ENCODE measurements at regions of chr6 and their contacts with region 1.

Region 1: GRCh38 chr6:166627033-166627874 is at the start of gene RPS6KA2:
- DNase-seq: peak; percentile 100
- ATAC-seq: peak; percentile 93 to 97 (median 95)
- H3K4me3 ChIP-seq: peak within 1 kb of the TSS; percentile 78 to 97 (median 92)
- H3K27ac ChIP-seq: peak within 1 kb of the TSS; percentile 85 to 97 (median 90)
- H3K4me1 ChIP-seq: peaks cover 5 to 76% (median 59%) of the 10 kb centered on the region in 9 donors
- H3K27me3 ChIP-seq: peaks cover 0 to 14% (median 0%) of the 10 kb centered on the region in 7 donors
- CTCF ChIP-seq: peak in 4 of 9 donors; percentile 28 to 43 (median 36)
- total RNA-seq, gene RPS6KA2: 47.7 to 91.4 (median 76.0) TPM

Region 2: DNA sequence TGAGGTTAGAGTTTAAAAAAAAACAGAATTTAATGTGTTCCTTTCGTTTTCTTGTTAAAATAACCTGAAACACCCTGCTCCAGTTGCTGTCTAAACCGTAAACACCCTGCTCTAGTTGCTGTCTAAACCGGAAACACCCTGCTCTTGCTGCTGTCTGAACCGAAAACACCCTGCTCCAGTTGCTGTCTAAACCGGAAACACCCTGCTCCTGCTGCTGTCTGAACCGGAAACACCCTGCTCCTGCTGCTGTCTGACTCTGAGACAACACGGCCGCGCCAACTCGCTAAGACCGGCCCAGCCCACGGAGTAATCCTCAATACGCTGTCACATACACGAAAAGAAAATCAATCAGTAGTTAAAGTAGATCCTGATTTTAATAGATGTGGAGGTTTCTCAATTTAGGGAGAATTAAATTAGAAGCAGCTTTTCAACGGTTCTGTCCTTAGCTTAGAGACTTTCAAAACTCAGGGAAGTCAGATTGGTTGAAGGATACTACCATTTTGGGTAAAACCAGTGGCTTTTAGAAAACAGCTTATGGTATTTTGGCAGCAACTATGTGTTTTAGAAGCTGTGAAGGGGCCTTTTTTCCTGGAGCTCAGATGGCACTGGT is 139.1 kb before region 1 on chr6:
- intact Hi-C with region 1: loop called in 1 of 10 experiments (anchors 10 kb)
- DNase-seq: peak; percentile 63 to 71
- ATAC-seq: peak; percentile 58 to 91 (median 80)
- H3K4me3 ChIP-seq: peak overlapping the region in 2 of 10 donors; percentile 2 to 5
- H3K27ac ChIP-seq: peak overlapping the region; percentile 18 to 88 (median 59)
- H3K4me1 ChIP-seq: peaks cover 6 to 38% (median 29%) of the 10 kb centered on the region in 9 donors
- H3K27me3 ChIP-seq: no peaks in the 10 kb centered on the region
- CTCF ChIP-seq: no peak

Region 3: GRCh38 chr6:166540631-166541331 is 86.5 kb before region 1 on chr6:
- intact Hi-C with region 1: loop called in 1 of 10 experiments (anchors 5 kb)
- DNase-seq: peak in 1 of 2 donors; percentile 54
- ATAC-seq: peak; percentile 61 to 91 (median 81)
- H3K4me3 ChIP-seq: peak overlapping the region in 6 of 10 donors; percentile 25 to 38 (median 29)
- H3K27ac ChIP-seq: peak overlapping the region; percentile 24 to 77 (median 59)
- H3K4me1 ChIP-seq: peaks cover 0 to 39% (median 25%) of the 10 kb centered on the region in 9 donors
- H3K27me3 ChIP-seq: no peaks in the 10 kb centered on the region
- CTCF ChIP-seq: no peak

Region 4: DNA sequence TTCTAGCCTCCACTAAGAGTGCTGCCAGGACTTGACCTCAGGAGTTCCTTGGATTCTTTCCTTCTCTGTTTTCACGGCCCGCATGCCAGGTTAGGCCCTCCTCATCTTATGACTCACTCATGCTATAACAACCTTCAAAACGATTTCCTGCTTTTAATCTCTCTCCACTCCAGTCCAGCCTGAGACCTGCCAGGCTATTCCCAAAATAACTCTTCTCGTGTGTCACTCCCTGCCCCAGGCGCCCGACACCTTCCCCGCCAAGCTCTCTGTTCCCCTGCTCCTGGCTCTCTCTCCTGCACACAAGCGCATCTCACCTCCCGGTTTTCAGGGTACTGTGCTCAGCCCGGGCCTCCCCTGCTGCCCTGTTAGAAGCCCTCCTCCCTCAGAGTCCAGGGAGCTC is 63.9 kb after region 1 on chr6:
- intact Hi-C with region 1: loop called in 1 of 10 experiments (anchors 1 kb)
- DNase-seq: peak; percentile 60 to 62
- ATAC-seq: peak; percentile 89 to 97 (median 94)
- H3K4me3 ChIP-seq: no peak overlapping the region
- H3K27ac ChIP-seq: peak overlapping the region in 9 of 10 donors; percentile 2 to 79 (median 63)
- H3K4me1 ChIP-seq: peaks cover 4 to 22% (median 17%) of the 10 kb centered on the region in 9 donors
- H3K27me3 ChIP-seq: no peaks in the 10 kb centered on the region
- CTCF ChIP-seq: no peak

Region 5: GRCh38 chr6:166830185-166830890 is 203.1 kb after region 1 on chr6:
- intact Hi-C with region 1: no loop called
- DNase-seq: no peak
- ATAC-seq: no peak
- H3K4me3 ChIP-seq: no peak overlapping the region
- H3K27ac ChIP-seq: no peak overlapping the region
- H3K4me1 ChIP-seq: peaks cover 0 to 5% (median 0%) of the 10 kb centered on the region in 9 donors
- H3K27me3 ChIP-seq: no peaks in the 10 kb centered on the region
- CTCF ChIP-seq: no peak

Measured in heart right ventricle (tissue), 16 donors.